Heart left ventricle (tissue), 16 donors: ENCODE measurements at regions of chr4 and their contacts with region 1.

Region 1: DNA sequence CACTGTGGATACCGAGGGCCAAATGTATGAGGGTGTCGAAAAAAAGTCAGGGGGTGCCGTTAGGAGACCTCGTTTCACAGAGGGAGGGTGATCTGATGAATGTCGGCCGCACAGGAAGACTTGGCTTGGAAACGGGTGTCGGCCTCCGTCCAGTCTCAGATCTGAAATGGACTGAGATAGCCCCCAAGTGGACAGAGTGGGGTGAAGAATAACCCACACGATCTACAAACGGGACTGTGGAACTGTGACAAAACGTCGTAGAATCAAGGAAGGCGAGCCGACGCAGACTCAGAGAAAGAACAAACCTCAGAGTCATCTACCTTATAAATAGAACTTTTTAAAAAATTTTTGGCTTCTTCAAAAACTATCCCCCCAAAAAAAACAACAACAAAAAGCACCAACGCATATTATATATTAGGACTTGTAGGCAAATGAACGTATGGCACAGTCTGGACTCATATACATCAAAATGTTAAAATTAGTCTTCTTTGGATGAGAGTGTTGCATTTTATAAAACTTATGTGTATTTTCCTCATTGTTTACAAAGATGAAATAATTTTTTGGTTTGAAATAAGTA is 63.8 kb upstream of the IRF2 start:
- DNase-seq: peak; percentile 90 to 92 (median 91)
- ATAC-seq: peak; percentile 91 to 94 (median 92)
- H3K4me3 ChIP-seq: peak overlapping the region; percentile 50 to 82 (median 67)
- H3K27ac ChIP-seq: peak overlapping the region; percentile 91 to 99 (median 95)
- H3K4me1 ChIP-seq: peaks cover 0 to 43% (median 25%) of the 10 kb centered on the region in 12 donors
- H3K27me3 ChIP-seq: no peaks in the 10 kb centered on the region
- CTCF ChIP-seq: peak; percentile 50 to 86 (median 72)
- POLR2A ChIP-seq: no peak

Region 2: GRCh38 chr4:184287697-184288255 is 250.3 kb before region 1 on chr4:
- intact Hi-C with region 1: loop called in 8 of 10 experiments (anchors 1 to 5 kb)
- DNase-seq: no peak
- ATAC-seq: peak; percentile 45 to 79 (median 78)
- H3K4me3 ChIP-seq: no peak overlapping the region
- H3K27ac ChIP-seq: peak overlapping the region in 1 of 12 donors; percentile 1
- H3K4me1 ChIP-seq: peaks cover 0 to 15% (median 0%) of the 10 kb centered on the region in 12 donors
- H3K27me3 ChIP-seq: no peaks in the 10 kb centered on the region
- CTCF ChIP-seq: peak in 10 of 12 donors; percentile 20 to 64 (median 50)
- POLR2A ChIP-seq: no peak

Region 3: DNA sequence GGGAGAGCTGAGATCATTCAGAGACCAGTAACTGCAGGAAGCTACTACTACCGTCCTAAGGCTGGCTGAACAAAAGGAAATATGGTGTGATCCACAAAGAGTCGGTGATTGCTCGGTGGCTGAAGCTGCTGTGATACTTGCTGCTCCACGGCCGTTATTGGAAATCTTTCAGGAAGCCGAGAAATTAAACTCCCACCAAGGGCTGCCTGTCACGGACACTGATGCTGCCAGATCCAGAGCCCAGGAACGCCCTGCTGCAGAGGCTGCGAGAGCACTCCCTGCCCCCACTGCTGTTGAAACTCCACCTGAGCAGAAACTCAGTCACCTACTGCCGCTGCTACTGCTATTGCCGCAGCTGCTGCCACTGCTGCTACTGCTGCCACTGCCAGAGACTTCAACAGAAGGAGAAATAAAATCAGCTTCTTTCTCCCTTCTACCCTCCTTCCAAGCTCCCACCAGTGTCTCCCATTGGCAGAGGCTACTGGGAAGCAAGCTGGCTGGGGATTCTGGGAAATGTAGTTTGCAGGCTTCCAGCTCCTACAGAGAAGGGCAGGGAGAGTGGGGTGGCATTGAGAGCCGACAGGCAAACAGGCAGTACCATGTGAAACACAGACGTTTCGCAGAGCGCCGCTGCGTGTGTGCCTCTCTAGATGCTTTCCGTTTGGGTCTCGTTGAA is 194.5 kb before region 1 on chr4:
- intact Hi-C with region 1: loop called in 2 of 10 experiments (anchors 5 kb)
- DNase-seq: peak; percentile 75 to 85 (median 83)
- ATAC-seq: peak; percentile 75 to 84 (median 76)
- H3K4me3 ChIP-seq: peak overlapping the region; percentile 31 to 77 (median 62)
- H3K27ac ChIP-seq: peak overlapping the region in 11 of 12 donors; percentile 71 to 94 (median 85)
- H3K4me1 ChIP-seq: peaks cover 8 to 71% (median 47%) of the 10 kb centered on the region in 12 donors
- H3K27me3 ChIP-seq: no peaks in the 10 kb centered on the region
- CTCF ChIP-seq: no peak
- POLR2A ChIP-seq: no peak

Region 4: GRCh38 chr4:184395971-184396391 is 142.1 kb before region 1 on chr4:
- intact Hi-C with region 1: loop called in 3 of 10 experiments (anchors 10 kb)
- DNase-seq: no peak
- ATAC-seq: no peak
- H3K4me3 ChIP-seq: no peak overlapping the region
- H3K27ac ChIP-seq: peak overlapping the region; percentile 27 to 92 (median 70)
- H3K4me1 ChIP-seq: peaks cover 6 to 88% (median 34%) of the 10 kb centered on the region in 12 donors
- H3K27me3 ChIP-seq: no peaks in the 10 kb centered on the region
- CTCF ChIP-seq: no peak
- POLR2A ChIP-seq: no peak

Region 5: DNA sequence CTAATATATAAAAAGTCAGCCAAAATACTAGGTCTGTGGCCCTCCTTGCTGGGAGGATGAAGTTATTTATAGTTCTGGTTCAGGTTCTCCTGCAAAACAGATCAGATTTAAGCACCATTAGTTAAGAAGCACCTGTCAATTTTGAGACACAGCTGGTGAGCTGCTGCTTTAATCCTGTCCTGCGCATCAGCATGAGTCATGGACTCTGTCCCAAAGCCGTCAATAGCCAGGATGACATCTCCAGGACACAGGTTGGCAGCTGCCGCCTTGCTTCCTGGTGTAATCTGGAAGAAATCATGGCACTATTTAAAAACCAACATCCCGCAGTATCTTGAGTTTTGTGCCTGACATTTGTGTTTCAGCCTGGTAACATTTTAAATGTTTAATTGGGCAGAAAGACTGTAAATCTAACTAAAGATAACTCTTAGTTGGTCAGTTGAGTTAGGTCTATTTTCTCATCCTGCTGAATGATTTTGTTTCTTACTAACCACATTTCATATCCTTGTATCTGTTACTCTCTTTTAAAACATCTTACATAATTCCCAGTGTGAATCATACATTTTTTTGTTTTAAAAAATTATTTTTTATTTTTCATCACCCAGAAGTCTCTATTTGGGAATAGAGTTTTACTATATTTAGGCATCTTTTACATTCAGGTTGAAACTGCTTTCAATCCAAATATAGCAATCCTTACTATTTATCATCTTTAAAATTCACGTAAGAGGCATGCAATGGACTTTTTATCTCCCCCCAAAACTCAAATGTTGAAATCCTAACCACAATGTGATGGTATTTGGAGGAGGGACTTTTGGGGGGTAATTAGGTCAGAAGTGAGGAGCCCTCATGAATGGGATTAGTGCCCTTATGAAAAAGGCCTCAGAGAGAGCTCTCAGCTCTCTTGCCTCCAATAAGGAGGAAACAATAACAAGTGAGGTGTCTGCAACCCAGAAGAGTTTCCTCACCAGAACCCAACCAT is 987.1 kb after region 1 on chr4:
- intact Hi-C with region 1: no loop called
- DNase-seq: no peak
- ATAC-seq: peak in 3 of 4 donors; percentile 26 to 66 (median 63)
- H3K4me3 ChIP-seq: no peak overlapping the region
- H3K27ac ChIP-seq: peak overlapping the region in 7 of 12 donors; percentile 1 to 64 (median 27)
- H3K4me1 ChIP-seq: peaks cover 0 to 39% (median 10%) of the 10 kb centered on the region in 12 donors
- H3K27me3 ChIP-seq: no peaks in the 10 kb centered on the region
- CTCF ChIP-seq: no peak
- POLR2A ChIP-seq: no peak